Caco-2 (cell line): ENCODE measurements at regions of chr1 and their contacts with region 1.

Region 1: DNA sequence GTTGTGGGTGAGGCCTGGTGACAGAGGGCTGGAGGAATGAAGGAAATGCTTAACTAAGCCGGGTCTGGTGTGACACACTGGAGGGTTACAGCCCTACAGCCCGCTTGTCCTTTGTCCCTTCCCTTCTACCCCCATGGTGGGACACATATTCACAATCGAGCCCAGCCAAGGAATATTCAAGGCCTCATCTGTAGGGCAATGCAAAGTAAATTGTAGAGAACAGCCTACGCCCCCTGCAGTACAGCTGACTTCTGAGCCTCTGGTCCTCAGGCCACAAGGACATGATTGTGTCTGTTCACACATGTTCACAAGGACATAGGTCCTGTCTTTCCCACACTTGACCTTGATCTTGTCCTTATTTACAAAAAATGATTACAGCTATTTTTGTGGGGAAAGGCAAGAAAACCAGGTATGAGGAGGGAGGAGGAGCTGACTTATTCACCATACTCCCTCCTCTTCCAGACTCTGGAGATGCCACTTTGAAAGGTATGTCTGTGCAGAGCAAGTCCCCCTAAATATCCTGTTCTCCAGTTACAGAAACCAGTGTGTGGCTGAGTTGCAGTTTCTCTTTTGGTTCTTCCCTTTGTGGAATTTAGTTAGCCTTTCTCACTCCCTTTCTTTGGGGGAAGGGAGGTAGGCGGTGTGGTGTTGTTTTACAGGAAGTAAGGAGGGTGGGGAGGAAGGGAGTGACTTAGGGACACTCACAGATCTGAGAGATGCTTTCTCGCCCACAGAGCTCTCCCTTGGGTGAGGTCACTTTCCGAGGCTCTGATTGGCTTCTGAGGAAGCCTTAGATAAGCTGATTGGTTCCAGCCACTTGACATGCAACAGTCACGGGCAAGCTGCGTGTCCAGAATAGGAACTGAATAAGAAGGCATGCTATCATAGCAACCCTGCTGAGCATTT is 14.6 kb downstream of the POLR3GL start:
- DNase-seq: peak; percentile 82 to 92
- H3K4me3 ChIP-seq: no peak overlapping the region
- H3K4me3 Mint-ChIP-seq: no peak overlapping the region
- H3K27ac Mint-ChIP-seq: no peak overlapping the region
- H3K4me1 ChIP-seq: peaks cover 32% of the 10 kb centered on the region
- H3K4me1 Mint-ChIP-seq: no peaks in the 10 kb centered on the region
- H3K27me3 ChIP-seq: no peaks in the 10 kb centered on the region
- H3K27me3 Mint-ChIP-seq: no peaks in the 10 kb centered on the region
- CTCF ChIP-seq: peak in 1 of 2 experiments; percentile 37

Region 2: GRCh38 chr1:145927063-145927886 is 51.8 kb before region 1 on chr1 and contains the start of gene RBM8A:
- CTCF ChIA-PET with region 1: interaction called, 4 read pairs
- POLR2A ChIA-PET with region 1: no interaction called
- intact Hi-C with region 1: loop called (anchors 5 kb)
- DNase-seq: peak; percentile 95 to 97
- H3K4me3 ChIP-seq: peak within 1 kb of the TSS; percentile 84
- H3K4me3 Mint-ChIP-seq: no peak within 1 kb of the TSS
- H3K27ac Mint-ChIP-seq: no peak within 1 kb of the TSS
- H3K4me1 ChIP-seq: peaks cover 3% of the 10 kb centered on the region
- H3K4me1 Mint-ChIP-seq: peaks cover 6% of the 10 kb centered on the region
- H3K27me3 ChIP-seq: no peaks in the 10 kb centered on the region
- H3K27me3 Mint-ChIP-seq: no peaks in the 10 kb centered on the region
- CTCF ChIP-seq: peak; percentile 73 to 74
- total RNA-seq, gene RBM8A: 178 and 185 TPM in 2 replicates

Region 3: GRCh38 chr1:145996433-145997015 is 17.4 kb after region 1 on chr1 and contains the start of gene TXNIP:
- CTCF ChIA-PET with region 1: interaction called, 7 read pairs
- POLR2A ChIA-PET with region 1: interaction called, 4 read pairs
- intact Hi-C with region 1: loop called (anchors 1 kb)
- DNase-seq: peak; percentile 95 to 98
- H3K4me3 ChIP-seq: peak within 1 kb of the TSS; percentile 91
- H3K4me3 Mint-ChIP-seq: peak within 1 kb of the TSS; percentile 84
- H3K27ac Mint-ChIP-seq: peak within 1 kb of the TSS; percentile 93
- H3K4me1 ChIP-seq: peaks cover 13% of the 10 kb centered on the region; the same call in 1 of the 2 replicates
- H3K4me1 Mint-ChIP-seq: peaks cover 15% of the 10 kb centered on the region
- H3K27me3 ChIP-seq: no peaks in the 10 kb centered on the region
- H3K27me3 Mint-ChIP-seq: no peaks in the 10 kb centered on the region
- CTCF ChIP-seq: no peak
- total RNA-seq, gene TXNIP: 27.5 and 38.6 TPM in 2 replicates

Region 4: DNA sequence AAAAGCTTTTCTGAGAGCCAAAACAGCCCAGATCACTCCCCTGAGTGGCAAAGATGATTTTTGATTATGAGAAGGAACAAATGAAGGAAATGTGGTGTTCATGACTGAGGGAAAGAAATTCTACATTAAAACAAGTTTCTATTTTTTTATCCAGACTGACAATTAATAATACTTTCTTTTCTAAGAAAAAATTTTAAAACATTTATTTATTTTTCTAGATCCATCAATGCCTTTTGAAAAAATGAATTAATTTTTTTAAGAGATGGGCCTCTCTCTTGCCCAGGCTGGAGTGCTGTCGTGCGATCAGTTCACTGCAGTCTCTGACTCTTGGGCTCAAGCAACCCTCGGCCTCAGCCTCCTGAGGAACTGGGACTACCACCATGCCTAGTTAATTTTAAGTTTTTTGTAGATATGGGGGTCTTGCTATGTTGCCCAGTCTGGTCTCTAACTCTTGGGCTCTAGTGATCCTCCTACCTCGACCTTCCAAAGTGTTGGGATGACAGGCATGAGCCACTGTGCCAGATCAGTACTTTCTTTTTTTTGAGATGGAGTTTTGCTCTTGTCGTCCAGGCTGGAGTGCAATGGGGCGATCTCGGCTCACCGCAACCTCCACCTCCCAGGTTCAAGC is 28.5 kb after region 1 on chr1:
- CTCF ChIA-PET with region 1: interaction called, 22 read pairs
- POLR2A ChIA-PET with region 1: interaction called, 8 read pairs
- intact Hi-C with region 1: loop called (anchors 1 kb)
- DNase-seq: no peak
- H3K4me3 ChIP-seq: no peak overlapping the region
- H3K4me3 Mint-ChIP-seq: no peak overlapping the region
- H3K27ac Mint-ChIP-seq: no peak overlapping the region
- H3K4me1 ChIP-seq: 0 out of 2 replicates have a peak, but pooled peaks cover 3% of the 10 kb centered on the region
- H3K4me1 Mint-ChIP-seq: peaks cover 5% of the 10 kb centered on the region
- H3K27me3 ChIP-seq: no peaks in the 10 kb centered on the region
- H3K27me3 Mint-ChIP-seq: no peaks in the 10 kb centered on the region
- CTCF ChIP-seq: no peak

Region 5: GRCh38 chr1:146012737-146013403 is 33.8 kb after region 1 on chr1:
- CTCF ChIA-PET with region 1: interaction called, 9 read pairs
- POLR2A ChIA-PET with region 1: interaction called, 8 read pairs
- intact Hi-C with region 1: loop called (anchors 1 kb)
- DNase-seq: peak in 1 of 2 experiments; percentile 65
- H3K4me3 ChIP-seq: no peak overlapping the region
- H3K4me3 Mint-ChIP-seq: no peak overlapping the region
- H3K27ac Mint-ChIP-seq: no peak overlapping the region
- H3K4me1 ChIP-seq: no peaks in the 10 kb centered on the region
- H3K4me1 Mint-ChIP-seq: peaks cover 8% of the 10 kb centered on the region
- H3K27me3 ChIP-seq: no peaks in the 10 kb centered on the region
- H3K27me3 Mint-ChIP-seq: peaks cover 7% of the 10 kb centered on the region
- CTCF ChIP-seq: peak; percentile 50 to 81